Mucosa of descending colon (tissue), 3 donors: ENCODE measurements at regions of chr2 and their contacts with region 1.

Region 1: GRCh38 chr2:34096562-34097171 is 497.6 kb upstream of the FAM98A start:
- DNase-seq: peak in 1 of 3 donors; percentile 81
- ATAC-seq: peak; percentile 74
- H3K4me3 ChIP-seq: no peak overlapping the region
- H3K4me1 ChIP-seq: no peaks in the 10 kb centered on the region
- CTCF ChIP-seq: no peak

Region 2: DNA sequence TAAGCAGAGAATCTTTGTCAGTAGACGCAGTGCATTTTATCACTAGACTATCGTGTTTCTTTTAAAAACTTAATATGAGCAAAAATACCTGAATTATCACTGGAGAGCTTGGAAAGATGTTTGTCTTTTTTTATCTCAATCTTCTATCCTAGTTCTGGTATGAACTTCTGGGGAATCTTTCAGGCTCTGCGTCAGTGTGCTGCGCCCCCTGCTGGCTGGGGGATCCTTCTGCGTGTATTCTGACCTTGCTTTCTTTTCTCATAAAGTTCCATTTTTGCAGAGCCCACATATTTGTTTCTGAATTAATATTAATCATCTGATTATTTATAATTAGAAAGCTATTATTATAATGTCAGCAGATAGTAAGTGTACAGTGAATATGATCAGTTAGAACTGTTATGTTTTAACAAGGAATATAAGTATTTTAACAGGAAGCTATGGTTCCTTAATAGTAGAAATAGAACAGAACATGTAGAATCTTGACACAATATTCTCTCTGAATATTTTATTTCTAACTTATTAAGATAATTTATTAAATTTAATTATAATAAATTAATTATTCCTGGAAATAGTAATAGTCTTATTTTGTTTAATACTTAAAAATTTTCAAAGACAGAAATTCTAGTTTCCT is 1313.9 kb after region 1 on chr2:
- intact Hi-C with region 1: loop called in 1 of 2 experiments (anchors 10 kb)
- DNase-seq: peak in 2 of 3 donors; percentile 56 to 68
- ATAC-seq: peak; percentile 40
- H3K4me3 ChIP-seq: no peak overlapping the region
- H3K4me1 ChIP-seq: no peaks in the 10 kb centered on the region
- CTCF ChIP-seq: peak; percentile 78